Caco-2 (cell line): ENCODE measurements at regions of chr1 and their contacts with region 1.

Region 1: DNA sequence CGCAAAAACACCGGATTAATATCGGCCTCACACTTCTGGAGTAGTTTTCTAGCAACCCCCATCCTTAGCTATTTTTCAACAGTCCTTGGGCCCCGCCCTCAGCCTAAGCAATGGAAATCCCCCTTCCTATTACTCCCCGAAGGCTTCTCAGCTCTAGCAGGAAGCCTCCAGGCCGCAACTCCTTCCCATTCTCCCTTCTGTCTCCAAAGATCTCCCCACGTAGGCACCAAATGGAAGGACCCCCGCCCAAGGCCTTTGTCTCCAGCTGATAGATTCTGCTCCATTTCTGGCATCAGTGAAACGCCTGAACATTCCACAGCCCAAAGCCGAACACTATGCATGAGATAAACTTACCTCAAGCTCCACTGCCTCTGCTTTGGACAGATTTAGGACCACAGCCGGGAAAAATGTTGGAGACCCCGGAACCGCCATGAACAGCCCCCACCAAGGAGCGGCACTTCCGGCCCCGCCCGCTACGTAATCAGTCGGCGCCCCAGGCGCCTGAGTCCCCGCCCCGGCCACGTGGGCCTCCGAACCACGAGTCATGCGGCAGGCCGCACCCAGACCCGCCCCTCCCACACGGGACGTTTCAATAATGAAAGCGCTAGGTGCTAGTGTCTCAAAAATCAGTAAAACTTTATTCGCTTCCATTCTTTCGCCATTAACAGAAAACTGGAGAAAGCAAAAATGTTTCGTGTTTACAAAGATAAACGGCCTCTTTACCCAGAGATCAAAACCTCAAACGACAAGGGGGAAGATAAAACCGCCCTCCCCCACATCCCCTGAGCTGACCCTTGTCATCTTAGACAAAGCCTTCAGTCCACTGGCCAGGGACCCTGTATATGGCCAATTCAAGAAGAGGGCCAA is at the start of gene NRAS:
- DNase-seq: peak; percentile 86 to 91
- H3K4me3 ChIP-seq: peak within 1 kb of the TSS; percentile 55
- H3K4me3 Mint-ChIP-seq: peak within 1 kb of the TSS; percentile 89
- H3K27ac Mint-ChIP-seq: peak within 1 kb of the TSS; percentile 97
- H3K4me1 ChIP-seq: peaks cover 4% of the 10 kb centered on the region; the same call in 1 of the 2 replicates
- H3K4me1 Mint-ChIP-seq: no peaks in the 10 kb centered on the region
- H3K27me3 ChIP-seq: no peaks in the 10 kb centered on the region
- H3K27me3 Mint-ChIP-seq: no peaks in the 10 kb centered on the region
- CTCF ChIP-seq: no peak
- total RNA-seq, gene NRAS: 38.2 and 39.9 TPM in 2 replicates

Region 2: DNA sequence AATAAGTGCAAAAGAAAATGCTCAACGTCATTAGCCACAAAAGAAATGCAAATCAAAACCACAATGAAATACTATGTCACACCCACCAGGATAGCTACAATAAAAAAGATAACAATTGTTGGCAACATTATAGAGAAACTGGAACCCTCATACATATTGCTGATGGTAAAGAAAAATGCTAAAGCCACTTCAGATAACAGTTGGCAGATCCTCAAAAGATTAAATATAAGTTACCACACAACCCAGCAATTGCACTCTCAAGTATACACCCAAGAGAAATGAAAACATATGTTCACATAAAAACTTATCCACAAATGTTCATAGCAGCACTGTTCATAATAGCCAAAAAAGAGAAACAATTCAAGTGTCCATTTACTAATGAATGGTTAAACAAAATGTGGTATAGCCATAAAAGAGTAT is 226.3 kb before region 1 on chr1:
- CTCF ChIA-PET with region 1: no interaction called
- POLR2A ChIA-PET with region 1: no interaction called
- intact Hi-C with region 1: no loop called
- DNase-seq: no peak
- H3K4me3 ChIP-seq: no peak overlapping the region
- H3K4me3 Mint-ChIP-seq: no peak overlapping the region
- H3K27ac Mint-ChIP-seq: no peak overlapping the region
- H3K4me1 ChIP-seq: 0 out of 2 replicates have a peak, but pooled peaks cover 6% of the 10 kb centered on the region
- H3K4me1 Mint-ChIP-seq: peaks cover 13% of the 10 kb centered on the region
- H3K27me3 ChIP-seq: no peaks in the 10 kb centered on the region
- H3K27me3 Mint-ChIP-seq: no peaks in the 10 kb centered on the region
- CTCF ChIP-seq: no peak

Region 3: GRCh38 chr1:114564141-114564540 is 152.4 kb before region 1 on chr1:
- CTCF ChIA-PET with region 1: no interaction called
- POLR2A ChIA-PET with region 1: no interaction called
- intact Hi-C with region 1: no loop called
- DNase-seq: no peak
- H3K4me3 ChIP-seq: no peak overlapping the region
- H3K4me3 Mint-ChIP-seq: no peak overlapping the region
- H3K27ac Mint-ChIP-seq: no peak overlapping the region
- H3K4me1 ChIP-seq: no peaks in the 10 kb centered on the region
- H3K4me1 Mint-ChIP-seq: no peaks in the 10 kb centered on the region
- H3K27me3 ChIP-seq: no peaks in the 10 kb centered on the region
- H3K27me3 Mint-ChIP-seq: no peaks in the 10 kb centered on the region
- CTCF ChIP-seq: no peak

Region 4: GRCh38 chr1:114670083-114671010 is 46.2 kb before region 1 on chr1:
- CTCF ChIA-PET with region 1: no interaction called
- POLR2A ChIA-PET with region 1: no interaction called
- intact Hi-C with region 1: loop called (anchors 1 kb)
- DNase-seq: peak; percentile 89 to 91
- H3K4me3 ChIP-seq: peak overlapping the region; percentile 76
- H3K4me3 Mint-ChIP-seq: peak overlapping the region; percentile 81
- H3K27ac Mint-ChIP-seq: peak overlapping the region; percentile 59
- H3K4me1 ChIP-seq: no peaks in the 10 kb centered on the region
- H3K4me1 Mint-ChIP-seq: peaks cover 21% of the 10 kb centered on the region
- H3K27me3 ChIP-seq: no peaks in the 10 kb centered on the region
- H3K27me3 Mint-ChIP-seq: peaks cover 8% of the 10 kb centered on the region
- CTCF ChIP-seq: no peak

Region 5: GRCh38 chr1:114737314-114737849 is 20.8 kb after region 1 on chr1:
- CTCF ChIA-PET with region 1: no interaction called
- POLR2A ChIA-PET with region 1: interaction called, 10 read pairs
- intact Hi-C with region 1: no loop called
- DNase-seq: no peak
- H3K4me3 ChIP-seq: no peak overlapping the region
- H3K4me3 Mint-ChIP-seq: no peak overlapping the region
- H3K27ac Mint-ChIP-seq: no peak overlapping the region
- H3K4me1 ChIP-seq: no peaks in the 10 kb centered on the region
- H3K4me1 Mint-ChIP-seq: peaks cover 11% of the 10 kb centered on the region
- H3K27me3 ChIP-seq: no peaks in the 10 kb centered on the region
- H3K27me3 Mint-ChIP-seq: no peaks in the 10 kb centered on the region
- CTCF ChIP-seq: no peak

Region 6: GRCh38 chr1:114948982-114949381 is 232.4 kb after region 1 on chr1:
- CTCF ChIA-PET with region 1: no interaction called
- POLR2A ChIA-PET with region 1: no interaction called
- intact Hi-C with region 1: no loop called
- DNase-seq: no peak
- H3K4me3 ChIP-seq: no peak overlapping the region
- H3K4me3 Mint-ChIP-seq: no peak overlapping the region
- H3K27ac Mint-ChIP-seq: no peak overlapping the region
- H3K4me1 ChIP-seq: no peaks in the 10 kb centered on the region
- H3K4me1 Mint-ChIP-seq: no peaks in the 10 kb centered on the region
- H3K27me3 ChIP-seq: no peaks in the 10 kb centered on the region
- H3K27me3 Mint-ChIP-seq: no peaks in the 10 kb centered on the region
- CTCF ChIP-seq: no peak